Cardiac septum (tissue), 1 donor: ENCODE measurements at regions of chr6 and their contacts with region 1.

Region 1: DNA sequence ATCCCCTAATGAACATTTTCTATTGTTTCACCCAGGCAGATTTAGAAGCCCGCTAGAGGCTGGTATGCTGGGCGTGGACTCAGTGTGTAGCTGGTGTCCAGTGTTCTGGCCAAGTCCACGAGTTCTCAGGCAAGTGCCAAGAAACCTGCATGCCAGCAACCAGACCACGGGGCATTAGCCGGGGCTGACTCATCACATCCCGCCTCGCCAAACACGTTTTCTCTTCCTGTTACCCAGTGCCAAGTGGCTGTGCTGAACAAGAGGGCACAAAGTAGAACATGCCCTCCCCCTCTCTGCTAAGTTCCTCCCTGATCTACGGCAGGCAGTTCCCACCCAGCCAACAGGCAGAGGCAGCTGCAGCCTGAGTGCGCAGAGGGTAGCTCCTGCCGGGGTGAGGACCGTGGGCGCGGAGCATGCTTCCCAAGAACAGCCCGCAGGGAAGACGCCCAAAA is 29.6 kb downstream of the RAMACL start:
- DNase-seq: peak; percentile 93

Region 2: DNA sequence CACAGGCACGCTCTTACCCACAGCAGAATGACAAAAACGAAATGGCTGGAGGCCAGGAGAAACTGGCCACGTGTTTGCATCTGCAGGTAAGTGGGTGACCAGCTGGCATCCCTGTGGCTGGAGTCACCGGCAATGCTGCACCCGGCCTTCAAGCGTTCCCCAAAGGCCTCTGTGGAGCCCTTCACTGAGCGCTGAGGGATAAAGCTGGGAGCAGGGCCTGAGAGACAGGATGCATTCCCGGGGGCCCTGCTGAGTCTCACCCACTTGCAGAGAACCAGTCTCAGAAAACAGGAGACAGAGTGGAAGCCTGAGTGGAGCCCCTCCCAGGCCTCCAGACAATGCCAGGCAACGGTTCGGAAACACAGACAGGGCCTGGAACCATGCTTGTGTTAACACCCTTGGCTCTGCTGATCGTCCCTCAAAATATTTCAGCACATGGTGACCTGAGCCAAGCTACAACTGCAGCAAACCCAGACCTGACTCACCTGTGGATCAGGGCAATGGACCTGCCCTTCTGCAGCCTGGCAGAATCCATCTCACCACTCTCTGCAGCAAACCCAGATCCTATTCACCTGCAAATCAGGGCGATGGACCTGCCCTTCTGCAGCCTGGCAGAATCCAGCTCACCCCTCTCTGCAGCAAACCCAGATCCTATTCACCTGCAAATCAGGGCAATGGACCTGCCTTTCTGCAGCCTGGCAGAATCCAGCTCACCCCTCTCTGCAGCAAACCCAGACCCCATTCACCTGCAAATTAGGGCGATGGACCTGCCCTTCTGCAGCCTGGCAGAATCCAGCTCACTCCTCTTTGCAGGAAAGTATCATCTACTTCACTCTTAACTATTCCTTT is 429.0 kb before region 1 on chr6:
- intact Hi-C with region 1: no loop called
- DNase-seq: no peak

Region 3: DNA sequence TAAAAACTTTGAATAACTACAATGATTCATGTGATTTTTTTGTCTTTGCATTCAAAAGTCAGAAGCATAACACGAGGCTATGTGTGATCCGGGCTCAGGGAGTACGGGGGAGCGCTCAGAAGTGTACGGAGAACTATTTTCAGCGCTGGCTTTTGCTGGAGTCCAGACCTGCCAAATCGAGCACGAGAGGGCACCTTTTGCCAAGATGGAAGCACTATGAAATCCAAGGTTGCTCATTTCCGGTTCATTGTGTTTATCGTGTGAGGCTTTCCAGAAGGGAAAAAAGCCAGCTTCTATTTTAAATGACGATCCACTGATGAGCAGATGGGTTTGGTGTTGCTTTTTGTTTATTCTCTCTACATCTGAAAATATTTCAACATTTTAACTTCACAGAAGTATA is 18.3 kb after region 1 on chr6:
- intact Hi-C with region 1: loop called (anchors 2 kb)
- DNase-seq: no peak

Region 4: GRCh38 chr6:166586424-166587156 is 29.7 kb after region 1 on chr6 and contains the start of gene RAMACL:
- intact Hi-C with region 1: no loop called
- DNase-seq: no peak
- total RNA-seq, gene RAMACL: 1.4 TPM

Region 5: GRCh38 chr6:166627033-166627874 is 70.4 kb after region 1 on chr6 and contains the start of gene RPS6KA2:
- intact Hi-C with region 1: loop called (anchors 2 kb)
- DNase-seq: peak; percentile 100
- total RNA-seq, gene RPS6KA2: 103 TPM

Region 6: DNA sequence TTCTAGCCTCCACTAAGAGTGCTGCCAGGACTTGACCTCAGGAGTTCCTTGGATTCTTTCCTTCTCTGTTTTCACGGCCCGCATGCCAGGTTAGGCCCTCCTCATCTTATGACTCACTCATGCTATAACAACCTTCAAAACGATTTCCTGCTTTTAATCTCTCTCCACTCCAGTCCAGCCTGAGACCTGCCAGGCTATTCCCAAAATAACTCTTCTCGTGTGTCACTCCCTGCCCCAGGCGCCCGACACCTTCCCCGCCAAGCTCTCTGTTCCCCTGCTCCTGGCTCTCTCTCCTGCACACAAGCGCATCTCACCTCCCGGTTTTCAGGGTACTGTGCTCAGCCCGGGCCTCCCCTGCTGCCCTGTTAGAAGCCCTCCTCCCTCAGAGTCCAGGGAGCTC is 134.3 kb after region 1 on chr6:
- intact Hi-C with region 1: loop called (anchors 5 kb)
- DNase-seq: no peak